HEK293 (cell line): ENCODE measurements at regions of chr12 and their contacts with region 1.

Region 1: GRCh38 chr12:43882578-43883178 is 46.8 kb downstream of the TMEM117 start:
- H3K4me3 ChIP-seq: no peak overlapping the region
- H3K27ac ChIP-seq: no peak overlapping the region
- H3K4me1 ChIP-seq: peaks cover 20% of the 10 kb centered on the region
- CTCF ChIP-seq: peak; percentile 42; the same call in 1 of the 2 replicates

Region 2: GRCh38 chr12:43444940-43445564 is 437.6 kb before region 1 on chr12:
- CTCF ChIA-PET with region 1: interaction called, 15 read pairs
- POLR2A ChIA-PET with region 1: no interaction called
- H3K4me3 ChIP-seq: no peak overlapping the region
- H3K27ac ChIP-seq: no peak overlapping the region
- H3K4me1 ChIP-seq: no peaks in the 10 kb centered on the region
- CTCF ChIP-seq: no peak

Region 3: GRCh38 chr12:43776498-43776897 is 106.2 kb before region 1 on chr12:
- CTCF ChIA-PET with region 1: interaction called, 84 read pairs
- POLR2A ChIA-PET with region 1: interaction called, 10 read pairs
- H3K4me3 ChIP-seq: no peak overlapping the region
- H3K27ac ChIP-seq: no peak overlapping the region
- H3K4me1 ChIP-seq: no peaks in the 10 kb centered on the region
- CTCF ChIP-seq: peak; percentile 40; the same call in 1 of the 2 replicates

Region 4: DNA sequence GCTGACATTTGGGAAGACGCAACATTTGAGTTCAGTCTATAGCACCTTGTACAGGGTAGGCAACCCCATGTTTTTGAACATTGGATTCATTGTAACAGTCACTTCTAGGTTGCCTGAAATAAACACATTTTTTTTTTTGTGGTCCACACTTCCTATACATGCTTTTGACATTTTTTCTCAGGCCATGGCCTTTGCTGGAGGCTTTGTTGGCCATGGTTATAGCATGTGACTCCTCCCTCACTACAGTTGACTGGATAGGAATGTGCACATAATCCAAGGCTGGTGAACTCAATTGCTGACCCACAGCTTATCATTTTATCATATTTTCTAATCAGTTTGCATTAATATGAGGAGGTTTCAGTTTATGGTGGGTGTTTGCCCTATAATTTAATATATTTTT is 13.8 kb after region 1 on chr12:
- CTCF ChIA-PET with region 1: interaction called, 10 read pairs
- POLR2A ChIA-PET with region 1: no interaction called
- H3K4me3 ChIP-seq: no peak overlapping the region
- H3K27ac ChIP-seq: no peak overlapping the region
- H3K4me1 ChIP-seq: no peaks in the 10 kb centered on the region
- CTCF ChIP-seq: no peak